B cell (primary cell): ENCODE measurements at regions of chr3 and their contacts with region 1.

Region 1: DNA sequence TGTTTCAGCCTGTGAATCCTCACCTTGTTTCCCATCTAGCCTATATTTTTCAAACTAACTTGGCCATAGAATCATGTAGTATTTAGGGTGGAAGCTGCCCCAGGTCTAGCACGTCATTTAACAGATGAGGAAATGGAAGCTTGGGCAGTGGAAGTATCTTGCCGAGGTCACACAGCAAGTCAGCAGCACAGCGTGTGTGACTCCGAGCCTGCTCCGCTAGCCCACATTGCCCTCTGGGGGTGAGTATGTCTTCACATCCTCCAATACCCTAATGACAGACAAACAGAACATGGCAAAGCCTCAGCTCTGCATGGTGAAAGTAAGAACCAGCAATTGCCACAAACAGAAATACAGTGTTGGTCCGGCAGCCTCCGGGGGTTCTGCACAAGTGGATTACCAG is 2.2 kb upstream of the CCR5 start:
- DNase-seq: peak; percentile 79
- ATAC-seq: peak; percentile 93
- H3K4me3 ChIP-seq: no peak overlapping the region
- H3K4me3 Mint-ChIP-seq: peak overlapping the region; percentile 33
- H3K27ac ChIP-seq: no peak overlapping the region
- H3K27ac Mint-ChIP-seq: peak overlapping the region; percentile 28
- H3K4me1 ChIP-seq: peaks cover 12 to 20% of the 10 kb centered on the region in 2 donors
- H3K4me1 Mint-ChIP-seq: peaks cover 32% of the 10 kb centered on the region
- H3K27me3 ChIP-seq: no peaks in the 10 kb centered on the region
- H3K27me3 Mint-ChIP-seq: no peaks in the 10 kb centered on the region
- CTCF ChIP-seq: peak; percentile 57

Region 2: DNA sequence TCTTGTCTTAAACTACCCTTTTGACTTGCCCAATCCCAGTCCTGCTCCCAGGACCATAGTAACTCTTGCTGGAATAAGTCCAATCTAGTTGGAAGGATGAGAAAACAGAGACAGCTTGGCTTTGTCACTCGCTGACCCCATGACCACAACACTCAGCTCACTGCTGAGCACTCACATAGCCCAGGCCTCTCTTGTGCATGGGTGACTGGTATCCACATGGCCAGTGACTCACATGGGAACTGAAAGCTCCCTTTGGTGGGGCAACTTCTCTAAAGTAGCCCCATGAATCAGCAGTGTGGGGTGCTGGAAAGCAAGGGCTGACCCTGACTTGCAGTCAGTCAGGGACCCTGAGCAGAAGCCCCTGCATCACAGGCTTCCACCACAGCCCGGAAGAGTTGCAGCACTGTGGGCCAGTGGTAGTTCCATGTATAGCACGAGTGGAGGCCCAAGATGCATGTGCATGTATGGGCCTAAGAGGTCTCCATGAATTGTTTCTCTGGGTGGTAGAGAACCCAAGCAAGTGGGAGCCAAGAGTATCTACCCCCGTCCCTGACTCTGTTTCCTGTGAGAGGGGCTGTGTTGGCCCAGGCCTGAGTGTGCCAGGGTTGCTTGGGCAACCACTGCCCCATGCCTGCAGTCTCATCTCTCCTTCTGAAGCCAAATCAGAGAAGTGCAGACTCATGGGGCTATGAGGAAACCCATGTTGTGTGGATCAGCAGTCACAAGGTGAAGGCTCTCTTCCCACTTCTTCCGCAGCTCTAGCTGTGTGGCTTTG is 279.1 kb before region 1 on chr3:
- CTCF ChIA-PET with region 1: interaction called, 233 read pairs
- POLR2A ChIA-PET with region 1: no interaction called
- intact Hi-C with region 1: loop called (anchors 1 kb)
- DNase-seq: peak; percentile 52
- ATAC-seq: peak; percentile 66
- H3K4me3 ChIP-seq: no peak overlapping the region
- H3K4me3 Mint-ChIP-seq: no peak overlapping the region
- H3K27ac ChIP-seq: no peak overlapping the region
- H3K27ac Mint-ChIP-seq: peak overlapping the region; percentile 29
- H3K4me1 ChIP-seq: peaks cover 50 to 58% of the 10 kb centered on the region in 2 donors
- H3K4me1 Mint-ChIP-seq: peaks cover 59% of the 10 kb centered on the region
- H3K27me3 ChIP-seq: no peaks in the 10 kb centered on the region
- H3K27me3 Mint-ChIP-seq: no peaks in the 10 kb centered on the region
- CTCF ChIP-seq: no peak

Region 3: GRCh38 chr3:46208167-46208704 is 160.3 kb before region 1 on chr3 and contains the start of gene CCR1:
- CTCF ChIA-PET with region 1: interaction called, 67 read pairs
- POLR2A ChIA-PET with region 1: no interaction called
- intact Hi-C with region 1: loop called (anchors 2 kb)
- DNase-seq: peak; percentile 60
- ATAC-seq: peak; percentile 82
- H3K4me3 ChIP-seq: peak within 1 kb of the TSS in 4 of 5 experiments; percentile 4 to 51 (median 11)
- H3K4me3 Mint-ChIP-seq: peak within 1 kb of the TSS; percentile 40
- H3K27ac ChIP-seq: no peak within 1 kb of the TSS
- H3K27ac Mint-ChIP-seq: peak within 1 kb of the TSS; percentile 70
- H3K4me1 ChIP-seq: peaks cover 25 to 38% of the 10 kb centered on the region in 2 donors
- H3K4me1 Mint-ChIP-seq: peaks cover 45% of the 10 kb centered on the region
- H3K27me3 ChIP-seq: no peaks in the 10 kb centered on the region
- H3K27me3 Mint-ChIP-seq: no peaks in the 10 kb centered on the region
- CTCF ChIP-seq: peak; percentile 64
- total RNA-seq, gene CCR1: 0.79 and 1.1 TPM in 2 replicates

Region 4: DNA sequence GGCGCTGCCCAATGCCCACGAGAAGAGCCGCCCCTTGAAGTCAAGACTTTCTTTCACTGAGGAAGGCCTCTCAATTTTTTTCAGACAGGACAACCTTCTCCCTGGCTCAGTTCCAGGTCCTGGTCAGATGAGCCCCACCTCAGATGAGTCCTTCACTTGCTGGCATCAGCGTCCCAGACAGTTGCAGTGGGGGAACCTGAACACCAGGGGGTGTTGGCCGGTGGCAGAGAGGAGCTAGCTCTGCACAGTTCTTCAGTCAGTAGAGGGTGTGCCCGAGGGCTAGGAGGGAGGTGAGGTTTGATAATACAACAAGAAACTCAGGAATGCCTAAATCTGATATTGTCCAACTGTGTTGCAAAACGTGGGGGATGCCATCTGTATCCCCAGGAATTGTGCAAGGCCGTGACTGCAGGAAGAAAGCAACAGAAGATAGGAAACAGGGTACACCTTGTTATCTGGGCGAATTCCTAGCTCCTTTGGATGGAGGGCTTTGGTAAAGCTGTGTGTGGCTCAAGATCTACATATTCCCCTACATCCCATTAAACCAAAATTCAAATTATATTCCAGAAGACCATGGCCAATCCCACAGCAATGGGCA is 92.0 kb before region 1 on chr3:
- CTCF ChIA-PET with region 1: interaction called, 160 read pairs
- POLR2A ChIA-PET with region 1: no interaction called
- intact Hi-C with region 1: loop called (anchors 1 kb)
- DNase-seq: peak; percentile 79
- ATAC-seq: peak; percentile 93
- H3K4me3 ChIP-seq: no peak overlapping the region
- H3K4me3 Mint-ChIP-seq: no peak overlapping the region
- H3K27ac ChIP-seq: no peak overlapping the region
- H3K27ac Mint-ChIP-seq: no peak overlapping the region
- H3K4me1 ChIP-seq: peaks cover 5 to 7% of the 10 kb centered on the region in 2 donors
- H3K4me1 Mint-ChIP-seq: peaks cover 11% of the 10 kb centered on the region
- H3K27me3 ChIP-seq: no peaks in the 10 kb centered on the region
- H3K27me3 Mint-ChIP-seq: no peaks in the 10 kb centered on the region
- CTCF ChIP-seq: peak; percentile 89

Region 5: GRCh38 chr3:46349485-46350261 is 18.9 kb before region 1 on chr3:
- CTCF ChIA-PET with region 1: interaction called, 11 read pairs
- POLR2A ChIA-PET with region 1: no interaction called
- intact Hi-C with region 1: loop called (anchors 2 kb)
- DNase-seq: peak; percentile 52
- ATAC-seq: peak; percentile 41
- H3K4me3 ChIP-seq: peak overlapping the region in 2 of 5 experiments; percentile 13 to 29
- H3K4me3 Mint-ChIP-seq: peak overlapping the region; percentile 67
- H3K27ac ChIP-seq: peak overlapping the region; percentile 37 to 41
- H3K27ac Mint-ChIP-seq: peak overlapping the region; percentile 55
- H3K4me1 ChIP-seq: peaks cover 48 to 56% of the 10 kb centered on the region in 2 donors
- H3K4me1 Mint-ChIP-seq: peaks cover 69% of the 10 kb centered on the region
- H3K27me3 ChIP-seq: no peaks in the 10 kb centered on the region
- H3K27me3 Mint-ChIP-seq: no peaks in the 10 kb centered on the region
- CTCF ChIP-seq: no peak

Region 6: GRCh38 chr3:46593274-46593862 is 224.8 kb after region 1 on chr3:
- CTCF ChIA-PET with region 1: no interaction called
- POLR2A ChIA-PET with region 1: no interaction called
- intact Hi-C with region 1: no loop called
- DNase-seq: no peak
- ATAC-seq: no peak
- H3K4me3 ChIP-seq: no peak overlapping the region
- H3K4me3 Mint-ChIP-seq: no peak overlapping the region
- H3K27ac ChIP-seq: no peak overlapping the region
- H3K27ac Mint-ChIP-seq: no peak overlapping the region
- H3K4me1 ChIP-seq: no peaks in the 10 kb centered on the region
- H3K4me1 Mint-ChIP-seq: no peaks in the 10 kb centered on the region
- H3K27me3 ChIP-seq: no peaks in the 10 kb centered on the region
- H3K27me3 Mint-ChIP-seq: peaks cover 15% of the 10 kb centered on the region
- CTCF ChIP-seq: no peak

Region 7: GRCh38 chr3:47315069-47315647 is 946.6 kb after region 1 on chr3:
- CTCF ChIA-PET with region 1: no interaction called
- POLR2A ChIA-PET with region 1: no interaction called
- intact Hi-C with region 1: no loop called
- DNase-seq: no peak
- ATAC-seq: no peak
- H3K4me3 ChIP-seq: no peak overlapping the region
- H3K4me3 Mint-ChIP-seq: no peak overlapping the region
- H3K27ac ChIP-seq: no peak overlapping the region
- H3K27ac Mint-ChIP-seq: no peak overlapping the region
- H3K4me1 ChIP-seq: peaks cover 0 to 3% of the 10 kb centered on the region in 2 donors
- H3K4me1 Mint-ChIP-seq: peaks cover 20% of the 10 kb centered on the region
- H3K27me3 ChIP-seq: no peaks in the 10 kb centered on the region
- H3K27me3 Mint-ChIP-seq: no peaks in the 10 kb centered on the region
- CTCF ChIP-seq: no peak